Activated CD4-positive, alpha-beta memory T cell treated with anti-CD3 and anti-CD28 coated beads, Interleukin-2, amount 10 ng/mL, durations not matched to agents 7 days and 5 days (primary cell): ENCODE measurements at regions of chr9 and their contacts with region 1.

Region 1: GRCh38 chr9:113376634-113377567 is at the start of gene HDHD3:
- DNase-seq: peak; percentile 85
- H3K4me3 Mint-ChIP-seq: peak within 1 kb of the TSS; percentile 76
- H3K27ac Mint-ChIP-seq: peak within 1 kb of the TSS; percentile 67
- H3K4me1 Mint-ChIP-seq: peaks cover 24% of the 10 kb centered on the region
- H3K27me3 Mint-ChIP-seq: no peaks in the 10 kb centered on the region
- total RNA-seq, gene HDHD3: 16.1 to 16.5 TPM

Region 2: GRCh38 chr9:113349445-113350094 is 27.3 kb before region 1 on chr9 and contains the start of gene BSPRY:
- CTCF ChIA-PET with region 1: no interaction called
- POLR2A ChIA-PET with region 1: interaction called, 10 read pairs
- DNase-seq: peak; percentile 53
- H3K4me3 Mint-ChIP-seq: peak within 1 kb of the TSS; percentile 82
- H3K27ac Mint-ChIP-seq: peak within 1 kb of the TSS; percentile 63
- H3K4me1 Mint-ChIP-seq: peaks cover 52% of the 10 kb centered on the region
- H3K27me3 Mint-ChIP-seq: peaks cover 11% of the 10 kb centered on the region
- total RNA-seq, gene BSPRY: 7.1 to 7.3 TPM

Region 3: GRCh38 chr9:113436728-113437471 is 60.0 kb after region 1 on chr9:
- CTCF ChIA-PET with region 1: no interaction called
- POLR2A ChIA-PET with region 1: no interaction called
- DNase-seq: no peak
- H3K4me3 Mint-ChIP-seq: no peak overlapping the region
- H3K27ac Mint-ChIP-seq: no peak overlapping the region
- H3K4me1 Mint-ChIP-seq: no peaks in the 10 kb centered on the region
- H3K27me3 Mint-ChIP-seq: peaks cover 12% of the 10 kb centered on the region

Region 4: GRCh38 chr9:113796646-113797426 is 419.9 kb after region 1 on chr9:
- CTCF ChIA-PET with region 1: no interaction called
- POLR2A ChIA-PET with region 1: no interaction called
- DNase-seq: no peak
- H3K4me3 Mint-ChIP-seq: no peak overlapping the region
- H3K27ac Mint-ChIP-seq: no peak overlapping the region
- H3K4me1 Mint-ChIP-seq: no peaks in the 10 kb centered on the region
- H3K27me3 Mint-ChIP-seq: no peaks in the 10 kb centered on the region